ENCODE measurements at regions of chr1 and their contacts with region 1.

Region 1: DNA sequence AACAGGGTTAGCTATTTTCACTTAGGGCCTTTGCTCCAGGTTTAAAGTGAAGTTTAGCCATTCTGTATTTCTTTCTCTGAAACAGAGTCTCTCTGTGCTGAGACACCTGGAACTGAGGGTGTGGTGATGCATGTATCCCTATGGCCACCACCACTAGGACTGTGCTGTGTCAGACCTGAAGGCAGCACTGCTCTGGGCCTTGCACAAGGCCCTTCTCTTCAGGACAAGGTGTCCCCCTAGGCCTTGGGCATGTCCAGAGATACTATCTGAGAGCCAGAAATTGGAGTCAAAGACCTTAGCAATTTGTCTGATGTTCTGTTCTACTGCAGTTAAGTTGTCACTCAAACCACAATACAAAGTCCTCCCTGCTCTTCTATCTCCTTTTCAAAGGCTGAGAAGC is 1649.2 kb downstream of the AMY1C start:
- DNase-seq: no peak
- H3K4me3 ChIP-seq: no peak overlapping the region
- H3K27ac ChIP-seq: no peak overlapping the region
- H3K4me1 ChIP-seq: no peaks in the 10 kb centered on the region
- H3K27me3 ChIP-seq: no peaks in the 10 kb centered on the region
- CTCF ChIP-seq: no peak
- EP300 ChIP-seq: no peak
- POLR2A ChIP-seq: no peak

Region 2: GRCh38 chr1:105204836-105205371 is 194.0 kb before region 1 on chr1:
- intact Hi-C with region 1: loop called (anchors 10 kb)
- DNase-seq: no peak
- H3K4me3 ChIP-seq: no peak overlapping the region
- H3K27ac ChIP-seq: no peak overlapping the region
- H3K4me1 ChIP-seq: no peaks in the 10 kb centered on the region
- H3K27me3 ChIP-seq: no peaks in the 10 kb centered on the region
- CTCF ChIP-seq: no peak
- EP300 ChIP-seq: no peak
- POLR2A ChIP-seq: no peak

Region 3: DNA sequence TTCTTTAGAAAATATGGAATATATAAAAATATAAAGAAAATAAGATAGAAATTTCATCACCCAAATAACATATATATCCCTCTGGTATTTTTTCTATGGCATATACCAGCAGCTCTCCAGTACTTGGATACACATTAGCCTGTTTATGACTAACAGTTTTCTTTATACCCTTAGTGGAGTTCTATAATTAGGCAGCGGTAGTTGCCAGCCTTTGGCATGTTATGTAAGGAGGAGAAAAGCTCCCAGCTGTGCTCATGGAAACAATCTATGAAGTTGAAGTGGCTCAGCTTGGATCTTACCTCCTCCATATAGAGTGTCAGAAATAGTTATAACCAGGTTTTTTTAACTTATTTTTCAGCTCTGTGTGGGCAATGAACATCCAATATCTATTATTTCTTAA is 12.4 kb before region 1 on chr1:
- intact Hi-C with region 1: no loop called
- DNase-seq: no peak
- H3K4me3 ChIP-seq: no peak overlapping the region
- H3K27ac ChIP-seq: no peak overlapping the region
- H3K4me1 ChIP-seq: no peaks in the 10 kb centered on the region
- H3K27me3 ChIP-seq: no peaks in the 10 kb centered on the region
- CTCF ChIP-seq: no peak
- EP300 ChIP-seq: no peak
- POLR2A ChIP-seq: no peak

Region 4: DNA sequence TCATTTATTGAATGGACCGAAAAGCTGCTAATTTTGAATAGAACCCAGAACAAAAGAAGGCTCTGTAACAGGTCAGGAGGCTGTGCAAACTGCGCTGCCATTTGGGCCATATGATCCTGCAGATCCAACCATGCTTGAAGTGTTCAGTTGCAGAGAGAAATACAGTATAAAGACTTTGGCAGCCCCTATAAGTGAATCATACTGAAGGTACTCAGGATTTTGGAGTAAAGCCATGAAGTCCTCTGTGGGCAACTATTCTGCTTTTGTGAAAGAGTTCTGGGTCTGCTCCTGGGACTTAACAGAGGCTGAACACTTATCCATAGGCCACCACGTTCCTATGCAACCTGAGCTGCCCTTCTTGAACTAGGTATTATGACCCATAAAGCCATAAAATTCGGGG is 44.0 kb after region 1 on chr1:
- intact Hi-C with region 1: no loop called
- DNase-seq: no peak
- H3K4me3 ChIP-seq: no peak overlapping the region
- H3K27ac ChIP-seq: no peak overlapping the region
- H3K4me1 ChIP-seq: no peaks in the 10 kb centered on the region
- H3K27me3 ChIP-seq: no peaks in the 10 kb centered on the region
- CTCF ChIP-seq: no peak
- EP300 ChIP-seq: no peak
- POLR2A ChIP-seq: no peak